ENCODE measurements at regions of chr13 and their contacts with region 1.

Region 1: DNA sequence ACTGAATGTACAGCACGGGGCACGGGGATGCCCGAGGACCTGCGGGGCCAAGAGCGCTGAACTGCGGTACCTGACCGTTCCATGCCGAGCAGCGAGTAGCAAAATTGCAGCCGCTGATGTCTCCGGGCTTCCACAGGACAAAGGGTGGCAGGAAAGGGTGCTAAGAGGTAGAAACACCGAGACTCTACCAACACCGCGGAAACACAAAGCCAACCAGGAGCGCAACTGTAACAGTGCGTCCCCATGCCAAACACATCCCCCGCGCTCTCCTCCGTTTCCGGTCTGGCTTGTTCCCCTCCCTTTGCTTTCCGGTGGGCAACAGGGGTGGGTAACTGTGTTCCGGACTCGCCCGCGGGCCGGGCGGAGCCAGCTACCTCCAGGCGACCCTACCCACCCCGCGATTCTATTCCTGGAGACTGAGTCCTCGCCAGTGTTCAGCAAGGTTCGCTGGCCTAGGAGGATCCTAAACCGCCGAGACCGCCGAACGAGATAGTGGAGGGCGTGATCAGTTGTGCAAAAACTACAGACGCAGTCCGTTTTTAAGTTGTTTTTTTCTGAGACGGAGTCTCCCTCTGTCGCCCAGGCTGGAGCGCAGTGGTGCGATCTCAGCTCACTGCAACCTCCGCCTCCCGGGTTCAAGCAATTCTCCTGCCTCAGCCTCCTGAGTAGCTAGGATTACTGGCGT is 34.9 kb upstream of the NEK3 start:
- DNase-seq: peak; percentile 90
- H3K4me3 Mint-ChIP-seq: peak overlapping the region; percentile 98
- H3K27ac Mint-ChIP-seq: peak overlapping the region; percentile 97
- H3K4me1 Mint-ChIP-seq: peaks cover 30% of the 10 kb centered on the region
- H3K27me3 Mint-ChIP-seq: no peaks in the 10 kb centered on the region

Region 2: DNA sequence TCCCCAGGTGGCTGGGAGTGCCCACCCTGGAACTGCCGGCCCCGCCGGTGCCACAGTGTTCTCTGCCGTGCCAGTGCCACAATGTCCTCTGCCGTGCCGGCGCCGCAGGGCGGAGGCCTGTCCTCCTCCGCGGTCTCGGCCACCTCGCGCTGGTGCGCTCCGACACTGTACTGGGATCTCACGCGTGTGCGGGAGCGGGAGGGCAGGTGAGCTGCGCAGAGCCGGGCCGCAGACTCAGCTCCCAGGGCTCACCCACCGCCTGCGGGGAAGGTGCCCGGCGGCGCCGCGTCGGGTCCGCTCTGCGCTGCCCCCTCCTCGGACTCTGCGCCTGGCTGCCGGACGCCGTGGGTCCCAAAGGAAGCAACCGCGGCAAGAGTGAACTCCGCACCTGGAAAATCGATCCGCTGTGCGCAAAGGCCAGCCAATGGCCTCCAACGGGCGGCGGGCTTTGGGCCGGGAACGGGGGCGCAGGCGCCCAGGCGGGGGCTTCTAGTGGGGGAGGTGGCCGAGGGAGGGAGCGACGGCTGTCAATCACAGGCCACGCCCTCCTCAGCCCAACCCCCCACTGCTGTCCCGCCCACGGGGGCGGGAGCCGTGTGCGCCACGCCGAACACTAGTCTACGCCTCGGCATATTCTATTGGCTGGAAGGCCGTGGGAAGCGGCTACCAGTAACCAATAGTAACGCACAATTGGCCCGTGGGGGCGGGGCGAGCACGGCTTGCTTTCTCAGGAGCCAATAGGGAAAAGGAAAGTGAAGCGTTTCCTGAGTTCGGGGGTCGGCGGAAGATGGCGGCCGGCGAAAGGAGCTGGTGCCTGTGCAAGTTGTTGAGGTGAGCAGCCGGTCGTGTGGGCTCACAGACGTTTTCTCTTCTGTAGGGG is 182.5 kb before region 1 on chr13 and contains the start of gene ALG11:
- CTCF ChIA-PET with region 1: no interaction called
- intact Hi-C with region 1: loop called (anchors 1 kb)
- DNase-seq: peak; percentile 100
- H3K4me3 Mint-ChIP-seq: peak within 1 kb of the TSS; percentile 98
- H3K27ac Mint-ChIP-seq: peak within 1 kb of the TSS; percentile 85
- H3K4me1 Mint-ChIP-seq: peaks cover 14% of the 10 kb centered on the region
- H3K27me3 Mint-ChIP-seq: peaks cover 10% of the 10 kb centered on the region
- total RNA-seq, gene ALG11: 12.6 to 15.6 TPM

Region 3: DNA sequence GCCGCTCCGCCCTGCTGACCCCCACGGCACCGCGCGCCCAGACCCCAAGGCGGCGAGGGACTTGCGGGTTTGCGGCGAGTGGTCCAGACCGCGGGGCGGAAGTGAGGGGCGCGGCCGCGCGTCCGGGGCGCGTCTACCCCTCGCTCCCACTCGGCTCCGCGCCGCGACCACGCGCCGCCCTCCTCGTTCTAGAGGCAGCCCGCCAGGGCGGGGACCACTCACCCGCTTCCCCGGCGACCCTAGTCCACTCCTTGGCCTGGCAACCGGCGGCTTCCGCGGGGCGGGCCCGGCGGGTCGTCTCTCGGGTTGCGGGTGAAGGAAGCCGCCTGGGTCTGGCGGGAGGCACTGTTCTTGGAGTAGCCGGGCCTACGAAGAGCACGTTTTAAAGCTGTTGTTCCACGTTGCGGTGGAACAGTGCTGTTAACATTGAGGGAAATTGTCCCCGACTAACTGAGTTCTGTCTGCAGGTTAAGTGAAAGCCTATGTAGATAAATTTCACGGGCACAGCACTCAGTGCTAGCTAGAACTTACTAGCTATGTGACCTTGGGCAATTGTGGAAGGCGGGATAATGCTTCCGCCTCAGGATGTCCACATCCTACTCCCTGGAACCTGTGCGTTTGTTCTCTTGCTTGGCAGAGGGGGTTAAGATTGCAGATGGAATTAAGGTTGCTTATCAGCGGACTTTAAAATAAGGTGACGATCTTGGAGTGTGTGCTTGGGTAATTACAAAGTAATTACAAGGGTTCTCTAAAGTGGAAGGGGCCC is 34.8 kb before region 1 on chr13 and contains the start of gene NEK3:
- CTCF ChIA-PET with region 1: no interaction called
- intact Hi-C with region 1: loop called (anchors 1 kb)
- DNase-seq: peak; percentile 62
- H3K4me3 Mint-ChIP-seq: peak within 1 kb of the TSS; percentile 79
- H3K27ac Mint-ChIP-seq: peak within 1 kb of the TSS; percentile 62
- H3K4me1 Mint-ChIP-seq: peaks cover 35% of the 10 kb centered on the region
- H3K27me3 Mint-ChIP-seq: peaks cover 5% of the 10 kb centered on the region
- total RNA-seq, gene NEK3: 4.0 to 4.3 TPM

Region 4: GRCh38 chr13:52179925-52180324 is 14.4 kb before region 1 on chr13:
- CTCF ChIA-PET with region 1: no interaction called
- intact Hi-C with region 1: loop called (anchors 2 kb)
- DNase-seq: no peak
- H3K4me3 Mint-ChIP-seq: no peak overlapping the region
- H3K27ac Mint-ChIP-seq: no peak overlapping the region
- H3K4me1 Mint-ChIP-seq: no peaks in the 10 kb centered on the region
- H3K27me3 Mint-ChIP-seq: no peaks in the 10 kb centered on the region

Region 5: DNA sequence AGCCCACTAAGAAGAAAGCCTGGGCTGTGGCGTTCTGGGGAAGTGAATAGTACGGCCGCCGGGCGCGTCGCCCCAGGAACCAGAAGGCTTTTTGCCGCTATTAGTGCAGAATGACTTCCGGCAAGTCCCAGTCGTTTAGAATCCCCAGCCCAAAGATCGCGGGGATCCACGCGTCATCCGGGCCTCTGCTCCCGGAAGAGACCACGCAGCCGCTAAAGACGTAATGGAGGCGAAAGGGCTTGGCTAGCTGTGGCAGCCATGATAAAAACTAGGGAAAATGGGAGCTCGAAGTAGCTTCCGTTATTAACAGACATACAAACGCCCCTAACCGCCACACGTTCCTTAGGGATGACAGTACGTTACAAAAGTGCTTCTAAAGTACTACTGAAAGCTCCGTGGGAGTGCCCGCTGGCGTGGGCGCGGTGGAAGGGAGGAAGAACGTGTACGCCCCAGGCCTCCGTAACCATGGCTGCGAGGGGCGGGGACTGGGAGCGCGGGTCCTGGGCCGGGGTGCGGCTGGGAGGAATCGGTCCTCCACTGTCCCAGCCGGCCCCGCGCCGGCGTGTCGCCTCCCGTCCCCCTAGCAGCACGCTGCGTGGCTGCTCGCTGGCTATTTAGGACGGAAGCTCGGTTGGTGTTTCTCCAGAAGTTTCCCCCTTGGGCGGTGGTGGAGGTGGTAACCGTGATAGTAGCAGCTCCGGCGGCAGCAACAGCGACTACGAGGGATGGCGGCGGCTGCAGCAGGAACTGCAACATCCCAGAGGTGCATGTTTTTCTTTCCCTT is 458.1 kb after region 1 on chr13 and contains the start of gene SUGT1:
- CTCF ChIA-PET with region 1: no interaction called
- intact Hi-C with region 1: loop called (anchors 2 kb)
- DNase-seq: peak; percentile 95
- H3K4me3 Mint-ChIP-seq: no peak within 1 kb of the TSS
- H3K27ac Mint-ChIP-seq: no peak within 1 kb of the TSS
- H3K4me1 Mint-ChIP-seq: peaks cover 14% of the 10 kb centered on the region
- H3K27me3 Mint-ChIP-seq: no peaks in the 10 kb centered on the region
- total RNA-seq, gene SUGT1: 42.7 to 44.1 TPM

Measured in activated naive CD4-positive, alpha-beta T cell treated with anti-CD3 and anti-CD28 coated beads for 36 hours (primary cell).